ENCODE measurements at regions of chr13 and their contacts with region 1.

Region 1: DNA sequence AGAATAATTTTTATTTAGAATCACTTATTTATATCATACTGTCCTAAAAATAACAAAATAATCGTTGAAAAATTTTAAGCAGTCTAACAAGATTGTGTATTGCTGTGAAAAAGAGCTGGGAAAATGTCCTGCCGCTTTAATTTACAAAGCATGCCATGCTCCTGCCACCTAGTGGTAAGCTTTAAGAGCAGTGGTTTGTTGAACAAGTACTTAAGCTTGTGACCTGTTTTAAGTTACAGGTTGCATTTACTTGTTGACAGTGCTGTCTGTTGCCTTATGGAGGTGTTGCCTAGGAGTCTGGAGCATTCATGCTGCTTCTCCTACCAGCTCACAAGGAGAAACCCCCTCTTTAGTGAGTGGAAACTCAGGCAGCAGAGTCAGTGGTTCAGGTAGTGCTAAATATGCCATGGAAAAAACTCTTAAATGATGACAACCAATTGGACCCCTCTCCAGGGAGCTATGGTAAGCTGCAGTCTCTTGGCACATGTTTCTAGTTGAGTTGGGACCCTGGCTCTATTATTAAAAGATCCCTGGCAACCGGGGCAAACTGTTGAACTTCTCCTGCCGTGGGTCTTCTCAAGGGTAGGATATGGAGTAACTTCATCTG is 68.4 kb downstream of the SPATA13 start:
- DNase-seq: peak; percentile 57
- ATAC-seq: peak; percentile 61
- H3K4me3 ChIP-seq: no peak overlapping the region
- H3K27ac ChIP-seq: no peak overlapping the region
- H3K4me1 ChIP-seq: peaks cover 0 to 2% of the 10 kb centered on the region in 2 experiments; a peak in 1 of 4 replicates
- H3K27me3 ChIP-seq: no peaks in the 10 kb centered on the region
- CTCF ChIP-seq: peak; percentile 48 to 91 (median 90); a peak in 5 of 6 replicates
- POLR2A ChIP-seq: no peak
- RAD21 ChIP-seq: peak; percentile 58

Region 2: GRCh38 chr13:24020375-24020830 is 208.6 kb before region 1 on chr13:
- CTCF ChIA-PET with region 1: interaction called, 42 read pairs
- POLR2A ChIA-PET with region 1: no interaction called
- RAD21 ChIA-PET with region 1: interaction called, 4 to 6 read pairs
- intact Hi-C with region 1: loop called (anchors 2 kb)
- DNase-seq: peak; percentile 64
- ATAC-seq: peak; percentile 84
- H3K4me3 ChIP-seq: no peak overlapping the region
- H3K27ac ChIP-seq: no peak overlapping the region
- H3K4me1 ChIP-seq: no peaks in the 10 kb centered on the region
- H3K27me3 ChIP-seq: no peaks in the 10 kb centered on the region
- CTCF ChIP-seq: peak; percentile 70 to 81 (median 81); a peak in 5 of 6 replicates
- POLR2A ChIP-seq: no peak
- RAD21 ChIP-seq: peak; percentile 80

Measured in HCT116 (cell line).